ENCODE measurements at regions of chr6 and their contacts with region 1.

Region 1: GRCh38 chr6:56223995-56224394 is 23.4 kb downstream of the COL21A1 start:
- DNase-seq: no peak
- H3K4me3 ChIP-seq: no peak overlapping the region
- H3K27ac ChIP-seq: no peak overlapping the region
- H3K4me1 ChIP-seq: no peaks in the 10 kb centered on the region
- H3K27me3 ChIP-seq: no peaks in the 10 kb centered on the region
- CTCF ChIP-seq: no peak
- POLR2A ChIP-seq: no peak

Region 2: DNA sequence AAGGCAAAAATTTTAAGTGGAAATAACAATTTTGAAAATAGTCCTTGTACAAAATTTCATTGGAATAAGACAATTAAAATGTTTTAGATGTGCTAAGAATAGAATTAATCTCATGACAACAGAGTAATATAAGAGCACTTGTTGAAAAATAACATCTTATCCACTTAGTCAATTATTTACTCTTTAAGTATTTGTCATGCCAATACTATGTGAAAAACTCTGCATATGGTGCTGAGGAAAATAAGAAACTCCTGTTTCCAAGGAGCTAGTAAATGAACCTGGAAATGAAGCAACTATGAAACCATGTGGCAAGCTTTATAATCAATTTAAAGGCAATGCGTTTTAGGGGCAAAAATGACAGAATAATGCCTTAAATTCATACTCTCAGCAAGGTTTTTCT is 1092.4 kb before region 1 on chr6:
- intact Hi-C with region 1: loop called (anchors 5 kb)
- DNase-seq: no peak
- H3K4me3 ChIP-seq: no peak overlapping the region
- H3K27ac ChIP-seq: no peak overlapping the region
- H3K4me1 ChIP-seq: no peaks in the 10 kb centered on the region
- H3K27me3 ChIP-seq: no peaks in the 10 kb centered on the region
- CTCF ChIP-seq: no peak
- POLR2A ChIP-seq: no peak